B cell (primary cell): ENCODE measurements at regions of chr2 and their contacts with region 1.

Region 1: GRCh38 chr2:106582148-106583143 is 95.3 kb downstream of the CD8B2 start:
- DNase-seq: peak; percentile 64
- ATAC-seq: peak; percentile 80
- H3K4me3 ChIP-seq: peak overlapping the region; percentile 26 to 66 (median 56)
- H3K4me3 Mint-ChIP-seq: peak overlapping the region; percentile 94
- H3K27ac ChIP-seq: no peak overlapping the region
- H3K27ac Mint-ChIP-seq: peak overlapping the region; percentile 62
- H3K4me1 ChIP-seq: peaks cover 9% of the 10 kb centered on the region in 2 donors
- H3K4me1 Mint-ChIP-seq: peaks cover 12% of the 10 kb centered on the region
- H3K27me3 ChIP-seq: peaks cover 0 to 22% (median 4%) of the 10 kb centered on the region in 4 experiments
- H3K27me3 Mint-ChIP-seq: peaks cover 48% of the 10 kb centered on the region
- CTCF ChIP-seq: peak; percentile 97

Region 2: GRCh38 chr2:105877945-105878344 is 704.5 kb before region 1 on chr2:
- CTCF ChIA-PET with region 1: no interaction called
- POLR2A ChIA-PET with region 1: no interaction called
- intact Hi-C with region 1: no loop called
- DNase-seq: no peak
- ATAC-seq: no peak
- H3K4me3 ChIP-seq: no peak overlapping the region
- H3K4me3 Mint-ChIP-seq: no peak overlapping the region
- H3K27ac ChIP-seq: peak overlapping the region in 1 of 2 donors; percentile 45
- H3K27ac Mint-ChIP-seq: peak overlapping the region; percentile 26
- H3K4me1 ChIP-seq: peaks cover 14 to 24% of the 10 kb centered on the region in 2 donors
- H3K4me1 Mint-ChIP-seq: peaks cover 55% of the 10 kb centered on the region
- H3K27me3 ChIP-seq: no peaks in the 10 kb centered on the region
- H3K27me3 Mint-ChIP-seq: no peaks in the 10 kb centered on the region
- CTCF ChIP-seq: no peak

Region 3: DNA sequence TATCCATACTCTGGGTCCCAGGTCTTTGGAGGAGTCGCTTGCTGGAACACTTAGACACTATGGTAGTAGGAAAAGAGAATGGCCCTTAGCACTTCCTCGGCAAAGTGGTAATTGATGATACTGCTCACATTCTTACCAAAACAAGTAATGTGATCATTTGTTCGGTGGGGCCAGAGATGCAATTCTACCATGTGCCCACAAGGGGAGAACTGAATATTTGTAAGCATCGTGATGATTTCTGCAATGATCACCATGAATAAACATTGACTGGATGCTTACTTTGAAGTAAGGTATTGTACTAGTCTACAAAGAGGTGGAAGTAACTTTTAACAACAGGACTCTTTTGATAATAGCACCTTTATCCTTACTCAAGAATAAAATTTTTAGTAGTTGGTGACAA is 14.4 kb after region 1 on chr2:
- CTCF ChIA-PET with region 1: interaction called, 10 read pairs
- POLR2A ChIA-PET with region 1: no interaction called
- intact Hi-C with region 1: no loop called
- DNase-seq: no peak
- ATAC-seq: no peak
- H3K4me3 ChIP-seq: no peak overlapping the region
- H3K4me3 Mint-ChIP-seq: no peak overlapping the region
- H3K27ac ChIP-seq: no peak overlapping the region
- H3K27ac Mint-ChIP-seq: no peak overlapping the region
- H3K4me1 ChIP-seq: no peaks in the 10 kb centered on the region
- H3K4me1 Mint-ChIP-seq: no peaks in the 10 kb centered on the region
- H3K27me3 ChIP-seq: peaks cover 0 to under 1% (median 0%) of the 10 kb centered on the region in 4 experiments
- H3K27me3 Mint-ChIP-seq: peaks cover 14% of the 10 kb centered on the region
- CTCF ChIP-seq: peak; percentile 26